H1 (cell line): ENCODE measurements at regions of chr10 and their contacts with region 1.

Region 1: DNA sequence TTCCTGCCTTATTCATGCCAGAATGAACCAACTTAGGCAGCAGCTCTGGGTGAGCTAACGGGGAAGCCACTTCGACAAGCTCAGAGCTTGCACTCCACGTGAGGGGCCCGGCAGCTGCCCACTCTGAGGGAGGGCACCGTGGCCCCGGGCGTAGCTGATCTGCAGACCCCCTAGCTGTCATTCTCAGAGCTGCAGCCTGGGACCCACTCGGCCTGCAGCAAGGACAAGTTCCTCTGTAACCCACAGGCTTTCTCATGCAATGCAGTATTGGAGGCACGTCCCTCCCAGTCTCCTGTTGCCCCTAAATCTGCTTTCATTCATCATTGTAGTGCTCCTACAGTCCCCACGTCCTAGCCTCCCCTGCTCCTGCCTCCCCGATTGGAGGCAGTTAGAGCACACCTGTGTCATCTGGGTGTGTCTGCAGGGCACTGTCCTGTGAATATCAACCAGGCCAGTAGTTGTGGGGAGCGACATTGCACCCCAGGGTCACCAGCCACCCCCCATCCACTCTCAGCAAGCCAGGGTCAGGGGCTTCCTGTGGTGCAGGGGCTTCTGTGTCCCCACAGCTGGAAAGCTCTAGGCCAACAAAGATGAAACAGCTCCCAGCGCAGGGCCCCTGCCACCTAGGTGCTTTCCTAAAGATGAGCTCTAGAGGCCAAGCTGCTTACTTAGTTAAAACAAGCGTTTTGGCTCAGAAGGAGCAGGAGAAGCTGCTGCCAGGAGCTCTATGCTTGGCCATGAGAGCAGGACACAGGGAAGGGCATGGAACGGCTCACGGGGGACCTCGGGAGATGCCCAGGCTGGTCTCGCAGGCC is 333.6 kb downstream of the ADARB2 start:
- DNase-seq: peak in 1 of 2 experiments; percentile 72
- H3K4me3 ChIP-seq: no peak overlapping the region
- H3K27ac ChIP-seq: no peak overlapping the region
- H3K4me1 ChIP-seq: peaks cover 0 to 9% (median 0%) of the 10 kb centered on the region in 4 experiments; a peak in 2 of 7 replicates
- H3K27me3 ChIP-seq: no peaks in the 10 kb centered on the region; a peak in 2 of 7 replicates
- CTCF ChIP-seq: peak; percentile 63 to 81 (median 80)
- EP300 ChIP-seq: no peak
- POLR2A ChIP-seq: no peak
- RAD21 ChIP-seq: peak; percentile 45 to 61

Region 2: DNA sequence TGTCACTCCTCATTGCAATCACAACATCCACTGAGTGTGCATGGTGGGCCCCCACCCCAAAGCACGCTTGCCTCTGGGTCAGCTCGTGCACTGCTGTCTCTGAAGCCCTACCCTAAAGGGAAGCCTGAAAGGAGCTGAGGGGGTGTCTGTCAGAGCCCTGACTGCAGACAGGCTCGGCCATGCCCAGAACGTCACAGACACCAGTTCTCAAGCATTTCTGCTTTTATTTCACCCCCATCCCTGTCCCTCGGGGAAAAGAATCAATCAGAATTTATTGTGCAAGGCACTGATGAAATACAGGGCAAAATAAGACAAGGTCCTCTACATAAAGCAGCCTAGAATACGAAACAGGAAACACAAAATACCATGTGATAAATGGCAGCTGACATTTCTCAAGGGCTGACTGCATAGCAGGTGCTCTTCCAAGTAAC is 115.7 kb before region 1 on chr10:
- CTCF ChIA-PET with region 1: no interaction called
- POLR2A ChIA-PET with region 1: no interaction called
- DNase-seq: no peak
- H3K4me3 ChIP-seq: no peak overlapping the region
- H3K27ac ChIP-seq: no peak overlapping the region
- H3K4me1 ChIP-seq: peaks cover 0 to 4% (median 1%) of the 10 kb centered on the region in 4 experiments; a peak in 3 of 7 replicates
- H3K27me3 ChIP-seq: no peaks in the 10 kb centered on the region
- CTCF ChIP-seq: no peak
- EP300 ChIP-seq: no peak
- POLR2A ChIP-seq: no peak
- RAD21 ChIP-seq: no peak

Region 3: GRCh38 chr10:1309617-1310270 is 94.0 kb before region 1 on chr10:
- CTCF ChIA-PET with region 1: no interaction called
- POLR2A ChIA-PET with region 1: no interaction called
- DNase-seq: peak; percentile 53 to 66
- H3K4me3 ChIP-seq: peak overlapping the region in 3 of 4 experiments; percentile 21 to 46 (median 38); a peak in 6 of 8 replicates
- H3K27ac ChIP-seq: peak overlapping the region; percentile 96
- H3K4me1 ChIP-seq: peaks cover 15 to 23% (median 20%) of the 10 kb centered on the region in 4 experiments
- H3K27me3 ChIP-seq: no peaks in the 10 kb centered on the region
- CTCF ChIP-seq: peak in 2 of 3 experiments; percentile 19 to 27; a peak in 2 of 4 replicates
- EP300 ChIP-seq: peak in 1 of 2 experiments; percentile 87; a peak in 1 of 3 replicates
- POLR2A ChIP-seq: peak; percentile 16 to 39; a peak in 2 of 3 replicates
- RAD21 ChIP-seq: peak in 1 of 2 experiments; percentile 50; a peak in 1 of 4 replicates

Region 4: DNA sequence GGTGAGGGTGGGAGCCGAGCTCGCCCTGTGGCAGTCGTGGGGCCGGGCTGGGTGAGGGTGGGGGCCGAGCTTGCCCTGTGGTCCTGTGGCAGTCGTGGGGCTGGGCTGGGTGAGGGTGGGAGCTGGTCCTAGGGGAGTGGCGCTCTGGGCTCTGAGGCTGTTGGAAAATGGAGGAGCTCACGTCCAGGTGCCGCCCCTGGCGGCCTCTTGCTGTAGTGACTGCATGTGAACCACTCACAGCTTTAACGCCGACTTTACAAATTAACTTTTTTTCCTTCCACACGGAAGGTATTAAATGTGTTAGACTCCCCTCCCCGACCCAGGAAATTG is 34.9 kb before region 1 on chr10:
- CTCF ChIA-PET with region 1: interaction called, 23 read pairs
- POLR2A ChIA-PET with region 1: no interaction called
- DNase-seq: peak; percentile 43 to 74
- H3K4me3 ChIP-seq: peak overlapping the region in 1 of 4 experiments; percentile 11; a peak in 1 of 8 replicates
- H3K27ac ChIP-seq: no peak overlapping the region
- H3K4me1 ChIP-seq: peaks cover 0 to 6% (median 4%) of the 10 kb centered on the region in 4 experiments; a peak in 5 of 7 replicates
- H3K27me3 ChIP-seq: no peaks in the 10 kb centered on the region
- CTCF ChIP-seq: peak; percentile 72 to 78 (median 73)
- EP300 ChIP-seq: no peak
- POLR2A ChIP-seq: no peak
- RAD21 ChIP-seq: peak; percentile 67 to 69

Region 5: GRCh38 chr10:1379601-1380000 is 24.1 kb before region 1 on chr10:
- CTCF ChIA-PET with region 1: interaction called, 14 read pairs
- POLR2A ChIA-PET with region 1: no interaction called
- DNase-seq: peak in 1 of 2 experiments; percentile 54
- H3K4me3 ChIP-seq: no peak overlapping the region
- H3K27ac ChIP-seq: no peak overlapping the region
- H3K4me1 ChIP-seq: peaks cover 5 to 11% (median 6%) of the 10 kb centered on the region in 4 experiments
- H3K27me3 ChIP-seq: no peaks in the 10 kb centered on the region; a peak in 2 of 7 replicates
- CTCF ChIP-seq: peak; percentile 56 to 78 (median 62)
- EP300 ChIP-seq: no peak
- POLR2A ChIP-seq: no peak
- RAD21 ChIP-seq: peak; percentile 82

Region 6: DNA sequence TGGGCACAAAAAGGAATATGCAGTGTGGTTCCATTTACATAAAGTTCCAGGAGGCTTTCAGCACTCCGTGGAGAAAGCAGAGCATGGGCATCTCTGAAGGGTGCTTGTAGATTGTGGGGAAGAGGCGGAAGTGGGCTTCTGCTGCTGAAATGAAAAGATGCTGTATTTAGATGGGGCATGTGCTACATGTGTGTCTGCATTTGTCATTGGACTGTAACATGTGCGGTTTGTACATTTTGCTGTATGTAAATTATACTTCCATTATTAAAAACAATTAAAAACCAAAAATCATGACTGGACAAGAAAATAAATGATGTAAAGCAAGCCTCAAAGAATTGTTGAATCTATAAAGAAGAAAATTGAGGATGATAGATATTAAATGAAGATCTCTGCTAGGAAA is 13.5 kb before region 1 on chr10:
- CTCF ChIA-PET with region 1: interaction called, 14 read pairs
- POLR2A ChIA-PET with region 1: no interaction called
- DNase-seq: no peak
- H3K4me3 ChIP-seq: no peak overlapping the region
- H3K27ac ChIP-seq: no peak overlapping the region
- H3K4me1 ChIP-seq: no peaks in the 10 kb centered on the region
- H3K27me3 ChIP-seq: no peaks in the 10 kb centered on the region
- CTCF ChIP-seq: no peak
- EP300 ChIP-seq: no peak
- POLR2A ChIP-seq: no peak
- RAD21 ChIP-seq: no peak

Region 7: GRCh38 chr10:1420661-1421362 is 17.1 kb after region 1 on chr10:
- CTCF ChIA-PET with region 1: interaction called, 39 read pairs
- POLR2A ChIA-PET with region 1: interaction called, 3 read pairs
- DNase-seq: peak; percentile 84 to 93
- H3K4me3 ChIP-seq: peak overlapping the region; percentile 35 to 64 (median 48); a peak in 6 of 8 replicates
- H3K27ac ChIP-seq: no peak overlapping the region
- H3K4me1 ChIP-seq: peaks cover 0 to 3% (median 2%) of the 10 kb centered on the region in 4 experiments; a peak in 5 of 7 replicates
- H3K27me3 ChIP-seq: peaks cover 0 to 14% (median 7%) of the 10 kb centered on the region in 4 experiments; a peak in 5 of 7 replicates
- CTCF ChIP-seq: peak; percentile 78 to 97 (median 86)
- EP300 ChIP-seq: peak in 1 of 2 experiments; percentile 23; a peak in 1 of 3 replicates
- POLR2A ChIP-seq: no peak
- RAD21 ChIP-seq: peak; percentile 93 to 94

Region 8: DNA sequence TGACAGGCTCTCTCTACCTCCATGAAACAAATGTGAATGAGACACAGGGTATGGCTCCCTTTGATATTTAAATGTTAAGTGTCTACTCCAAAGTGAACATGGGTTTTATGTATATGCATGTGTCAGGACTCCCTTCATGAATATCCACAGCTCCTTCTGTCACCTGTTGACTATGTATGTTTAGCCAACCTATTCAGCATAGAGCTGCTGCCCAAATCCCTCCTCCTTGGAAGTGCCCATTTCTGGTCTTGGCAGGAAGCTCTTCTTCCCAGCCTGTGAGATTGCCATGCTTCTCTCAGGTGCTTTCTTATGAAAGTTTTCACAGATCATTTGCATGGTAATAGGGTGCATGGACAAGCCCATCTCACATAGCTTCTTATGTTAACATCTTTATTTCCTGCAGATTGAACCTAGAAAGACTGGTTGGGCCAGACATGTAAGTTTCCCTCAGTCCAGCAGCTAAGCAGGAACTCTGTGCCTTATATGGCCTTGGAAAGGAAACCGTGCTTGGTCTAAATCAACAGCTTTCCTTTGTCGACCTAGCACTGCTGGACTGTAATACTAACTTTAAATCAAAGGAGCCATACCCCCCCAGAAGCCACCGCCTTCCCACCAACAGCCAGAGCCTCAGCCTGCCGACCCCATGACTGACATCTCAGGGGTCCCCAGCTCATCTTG is 44.7 kb after region 1 on chr10:
- CTCF ChIA-PET with region 1: interaction called, 10 read pairs
- POLR2A ChIA-PET with region 1: no interaction called
- DNase-seq: no peak
- H3K4me3 ChIP-seq: no peak overlapping the region
- H3K27ac ChIP-seq: no peak overlapping the region
- H3K4me1 ChIP-seq: peaks cover 0 to 7% (median 2%) of the 10 kb centered on the region in 4 experiments; a peak in 4 of 7 replicates
- H3K27me3 ChIP-seq: no peaks in the 10 kb centered on the region
- CTCF ChIP-seq: no peak
- EP300 ChIP-seq: no peak
- POLR2A ChIP-seq: no peak
- RAD21 ChIP-seq: no peak

Region 9: GRCh38 chr10:1491901-1492300 is 88.2 kb after region 1 on chr10:
- CTCF ChIA-PET with region 1: no interaction called
- POLR2A ChIA-PET with region 1: no interaction called
- DNase-seq: no peak
- H3K4me3 ChIP-seq: no peak overlapping the region
- H3K27ac ChIP-seq: no peak overlapping the region
- H3K4me1 ChIP-seq: no peaks in the 10 kb centered on the region
- H3K27me3 ChIP-seq: no peaks in the 10 kb centered on the region
- CTCF ChIP-seq: no peak
- EP300 ChIP-seq: no peak
- POLR2A ChIP-seq: no peak
- RAD21 ChIP-seq: no peak